Cardiac septum (tissue), 1 donor: ENCODE measurements at regions of chr17 and their contacts with region 1.

Region 1: GRCh38 chr17:3738562-3739295 is 15.0 kb downstream of the HASPIN start:
- DNase-seq: no peak

Region 2: GRCh38 chr17:3582915-3583314 is 155.8 kb before region 1 on chr17:
- intact Hi-C with region 1: no loop called
- DNase-seq: no peak

Region 3: GRCh38 chr17:3845621-3846441 is 107.1 kb after region 1 on chr17 and contains the start of gene NCBP3:
- intact Hi-C with region 1: loop called (anchors 5 kb)
- DNase-seq: peak; percentile 96
- total RNA-seq, gene NCBP3: 32.8 TPM